Natural killer cell (primary cell): ENCODE measurements at regions of chr14 and their contacts with region 1.

Region 1: GRCh38 chr14:24605435-24606190 is 3.9 kb downstream of the GZMH start:
- DNase-seq: peak; percentile 70 to 78
- ATAC-seq: peak; percentile 62 to 71 (median 66)
- H3K4me3 ChIP-seq: peak overlapping the region; percentile 1
- H3K4me3 Mint-ChIP-seq: peak overlapping the region; percentile 95
- H3K27ac ChIP-seq: peak overlapping the region; percentile 83
- H3K27ac Mint-ChIP-seq: peak overlapping the region; percentile 99
- H3K4me1 ChIP-seq: peaks cover 55% of the 10 kb centered on the region
- H3K4me1 Mint-ChIP-seq: peaks cover 55 to 58% of the 10 kb centered on the region in 2 donors
- H3K27me3 ChIP-seq: no peaks in the 10 kb centered on the region
- H3K27me3 Mint-ChIP-seq: no peaks in the 10 kb centered on the region
- CTCF ChIP-seq: peak; percentile 96

Region 2: GRCh38 chr14:24576182-24576581 is 29.4 kb before region 1 on chr14 and contains the start of gene CTSG:
- intact Hi-C with region 1: no loop called
- DNase-seq: no peak
- ATAC-seq: peak in 1 of 3 donors; percentile 32
- H3K4me3 ChIP-seq: no peak within 1 kb of the TSS
- H3K4me3 Mint-ChIP-seq: no peak within 1 kb of the TSS
- H3K27ac ChIP-seq: no peak within 1 kb of the TSS
- H3K27ac Mint-ChIP-seq: peak within 1 kb of the TSS in 1 of 2 donors; percentile 46
- H3K4me1 ChIP-seq: peaks cover 4% of the 10 kb centered on the region
- H3K4me1 Mint-ChIP-seq: peaks cover 0 to 24% of the 10 kb centered on the region in 2 donors
- H3K27me3 ChIP-seq: no peaks in the 10 kb centered on the region
- H3K27me3 Mint-ChIP-seq: no peaks in the 10 kb centered on the region
- CTCF ChIP-seq: no peak
- total RNA-seq, gene CTSG: 0.43 to 1.0 TPM in 2 of 3 donors, not detected in the other

Region 3: DNA sequence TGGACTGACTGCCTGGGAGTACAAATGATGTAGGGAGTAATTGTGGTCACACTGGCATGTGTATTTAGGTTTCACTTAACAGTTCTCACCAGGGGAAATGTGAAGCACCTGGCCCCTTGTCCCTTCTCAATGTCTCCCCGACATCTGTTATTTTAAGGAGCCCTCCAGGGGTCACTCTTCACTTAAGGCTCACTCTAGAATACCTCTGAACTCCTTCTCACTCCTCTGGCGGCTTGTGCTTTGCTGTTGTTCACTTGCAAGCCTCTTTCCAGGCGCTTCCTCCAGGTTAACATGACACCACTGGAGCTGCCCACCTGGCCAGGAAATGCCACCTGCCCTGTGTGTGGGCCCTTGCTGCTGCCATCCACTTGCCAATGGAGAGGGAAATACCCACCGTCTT is 84.9 kb after region 1 on chr14:
- intact Hi-C with region 1: loop called (anchors 5 kb)
- DNase-seq: peak in 1 of 2 donors; percentile 55
- ATAC-seq: peak in 1 of 3 donors; percentile 17
- H3K4me3 ChIP-seq: no peak overlapping the region
- H3K4me3 Mint-ChIP-seq: peak overlapping the region; percentile 22
- H3K27ac ChIP-seq: no peak overlapping the region
- H3K27ac Mint-ChIP-seq: peak overlapping the region in 1 of 2 donors; percentile 78
- H3K4me1 ChIP-seq: peaks cover 57% of the 10 kb centered on the region
- H3K4me1 Mint-ChIP-seq: peaks cover 62% of the 10 kb centered on the region in 2 donors
- H3K27me3 ChIP-seq: no peaks in the 10 kb centered on the region
- H3K27me3 Mint-ChIP-seq: no peaks in the 10 kb centered on the region
- CTCF ChIP-seq: peak; percentile 40

Region 4: DNA sequence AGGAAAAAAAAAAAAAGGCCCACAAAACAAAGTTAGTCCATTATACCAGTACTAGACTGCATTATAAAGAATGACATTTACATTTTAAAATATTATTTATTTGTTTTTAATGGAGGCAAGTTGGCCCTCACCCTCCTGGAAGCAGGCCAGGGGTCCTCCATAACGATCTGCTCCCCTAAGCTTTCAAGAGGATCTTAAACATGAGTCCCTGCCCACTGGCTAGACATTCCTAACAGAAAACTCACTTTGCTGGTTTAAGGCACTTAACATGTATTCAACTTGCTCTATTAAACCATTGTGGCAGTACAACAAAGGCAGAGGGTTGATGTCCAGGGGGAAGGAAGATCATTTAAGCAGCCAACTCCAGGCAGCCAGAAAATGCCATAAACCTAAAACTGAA is 333.0 kb after region 1 on chr14:
- intact Hi-C with region 1: no loop called
- DNase-seq: no peak
- ATAC-seq: no peak
- H3K4me3 ChIP-seq: no peak overlapping the region
- H3K4me3 Mint-ChIP-seq: no peak overlapping the region
- H3K27ac ChIP-seq: no peak overlapping the region
- H3K27ac Mint-ChIP-seq: no peak overlapping the region
- H3K4me1 ChIP-seq: no peaks in the 10 kb centered on the region
- H3K4me1 Mint-ChIP-seq: no peaks in the 10 kb centered on the region
- H3K27me3 ChIP-seq: peaks cover 4% of the 10 kb centered on the region
- H3K27me3 Mint-ChIP-seq: peaks cover 2 to 10% of the 10 kb centered on the region in 2 donors
- CTCF ChIP-seq: no peak

Region 5: DNA sequence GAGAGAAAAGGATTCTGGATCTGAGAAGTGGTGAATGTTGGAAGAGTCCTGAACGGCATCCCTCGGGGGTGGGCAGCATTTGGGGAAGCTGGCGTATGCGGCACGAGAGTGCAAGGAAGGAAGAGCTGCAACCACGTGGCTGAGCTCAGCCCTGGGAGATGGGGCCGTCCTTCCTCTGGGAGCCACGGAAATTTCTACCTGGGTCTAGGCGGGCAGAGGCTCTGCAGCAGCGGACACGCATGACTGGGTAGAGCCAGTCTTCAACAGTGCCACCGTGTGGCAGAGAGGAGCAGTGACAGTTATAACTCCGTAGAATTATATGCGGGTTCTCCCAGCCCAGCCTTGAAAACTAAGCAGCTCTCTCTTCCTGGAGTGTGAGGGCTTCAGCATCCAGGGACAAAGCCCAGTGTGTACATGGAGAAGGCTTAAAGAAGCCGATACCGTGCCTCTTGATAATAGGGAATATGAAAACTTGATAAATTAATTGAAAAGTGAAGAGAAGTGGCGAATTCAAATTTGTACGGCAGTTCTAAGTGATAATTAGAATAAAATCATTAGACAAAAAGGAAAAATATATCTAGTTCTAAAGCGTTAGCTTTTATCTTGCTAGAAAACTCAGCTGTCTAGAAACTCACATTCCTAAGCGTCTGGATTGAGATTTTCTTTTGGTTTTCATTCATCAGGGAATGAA is 527.3 kb after region 1 on chr14:
- intact Hi-C with region 1: loop called (anchors 5 kb)
- DNase-seq: peak; percentile 32 to 74
- ATAC-seq: peak; percentile 93 to 100 (median 99)
- H3K4me3 ChIP-seq: no peak overlapping the region
- H3K4me3 Mint-ChIP-seq: no peak overlapping the region
- H3K27ac ChIP-seq: no peak overlapping the region
- H3K27ac Mint-ChIP-seq: no peak overlapping the region
- H3K4me1 ChIP-seq: peaks cover 5% of the 10 kb centered on the region
- H3K4me1 Mint-ChIP-seq: peaks cover 8 to 9% of the 10 kb centered on the region in 2 donors
- H3K27me3 ChIP-seq: peaks cover 18% of the 10 kb centered on the region
- H3K27me3 Mint-ChIP-seq: peaks cover 42 to 63% of the 10 kb centered on the region in 2 donors
- CTCF ChIP-seq: peak; percentile 80